AG04449 (cell line): ENCODE measurements at regions of chr7 and their contacts with region 1.

Region 1: GRCh38 chr7:33886149-33886623 is 19.2 kb upstream of the BMPER start:
- DNase-seq: no peak
- H3K4me3 ChIP-seq: no peak overlapping the region
- CTCF ChIP-seq: peak; percentile 65

Region 2: GRCh38 chr7:33904681-33905388 is 18.6 kb after region 1 on chr7:
- CTCF ChIA-PET with region 1: interaction called, 25 read pairs
- POLR2A ChIA-PET with region 1: interaction called, 3 read pairs
- DNase-seq: no peak
- H3K4me3 ChIP-seq: peak overlapping the region; percentile 68
- CTCF ChIP-seq: peak; percentile 47

Region 3: DNA sequence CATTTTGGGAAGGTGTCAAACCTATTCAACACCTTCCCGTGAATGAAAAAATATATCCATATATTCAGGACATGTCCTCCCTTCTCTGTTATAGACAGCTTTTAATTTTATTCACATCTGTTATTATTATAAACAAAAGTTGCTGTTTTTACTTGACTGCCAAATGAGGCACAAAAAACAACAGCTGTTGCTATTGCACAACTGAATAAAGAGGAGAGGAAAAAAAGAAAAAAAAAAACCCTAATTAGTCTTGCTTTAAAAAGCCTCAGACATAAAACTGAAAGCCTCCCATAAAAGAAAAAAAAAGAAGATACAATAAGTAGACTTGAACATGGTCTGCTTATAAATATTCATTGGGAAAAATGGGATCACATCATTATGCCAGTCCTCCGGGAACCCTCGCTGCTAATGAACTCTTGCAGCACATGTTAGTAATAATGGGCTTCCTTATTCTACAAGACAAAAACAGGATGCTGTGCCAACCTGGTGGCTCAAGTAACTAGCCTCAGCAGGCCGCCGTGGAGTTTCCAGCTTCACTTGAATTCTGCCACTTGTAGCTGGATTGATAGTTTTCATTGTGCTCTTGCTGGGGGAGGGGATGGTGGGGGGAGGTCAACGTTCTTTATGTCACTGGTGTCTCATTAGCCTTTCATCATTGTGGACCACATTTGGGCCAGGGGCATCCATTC is 172.8 kb after region 1 on chr7:
- CTCF ChIA-PET with region 1: no interaction called
- POLR2A ChIA-PET with region 1: no interaction called
- DNase-seq: no peak
- H3K4me3 ChIP-seq: no peak overlapping the region
- CTCF ChIP-seq: no peak